ENCODE measurements at regions of chr9 and their contacts with region 1.

Region 1: DNA sequence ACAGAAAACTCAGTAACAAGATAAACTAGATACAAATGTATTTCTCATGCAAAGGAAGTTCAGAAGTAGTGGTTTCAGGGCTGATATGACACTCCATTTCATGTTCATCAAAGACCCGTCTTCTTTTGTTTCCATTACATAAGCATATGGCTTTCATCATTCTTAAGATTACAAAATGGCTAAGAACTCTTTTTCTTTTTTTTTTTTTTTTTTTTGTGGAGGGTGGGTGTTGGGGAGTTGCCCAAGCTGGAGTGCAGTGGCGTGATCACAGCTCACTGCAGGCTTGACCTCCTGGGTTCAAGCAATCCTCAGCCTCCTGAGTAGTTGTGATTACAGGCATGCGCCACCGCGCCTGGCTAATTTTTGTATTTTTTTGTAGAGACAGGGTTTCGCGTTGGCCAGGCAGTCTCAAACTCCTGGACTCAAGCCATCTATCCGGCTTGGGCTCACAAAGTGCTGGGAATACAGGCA is 22.0 kb upstream of the PTBP3 start:
- DNase-seq: no peak
- H3K4me3 ChIP-seq: no peak overlapping the region
- H3K27ac ChIP-seq: no peak overlapping the region
- H3K4me1 ChIP-seq: peaks cover 0 to 3% (median 0%) of the 10 kb centered on the region in 3 donors
- H3K27me3 ChIP-seq: no peaks in the 10 kb centered on the region
- CTCF ChIP-seq: no peak
- POLR2A ChIP-seq: no peak

Region 2: GRCh38 chr9:111631071-111631971 is 724.1 kb before region 1 on chr9 and contains the start of gene DNAJC25:
- intact Hi-C with region 1: no loop called
- DNase-seq: peak; percentile 82
- H3K4me3 ChIP-seq: peak within 1 kb of the TSS; percentile 80 to 97 (median 88)
- H3K27ac ChIP-seq: peak within 1 kb of the TSS; percentile 87 to 96 (median 94)
- H3K4me1 ChIP-seq: peaks cover 19 to 54% (median 19%) of the 10 kb centered on the region in 3 donors
- H3K27me3 ChIP-seq: no peaks in the 10 kb centered on the region
- CTCF ChIP-seq: peak in 2 of 6 experiments; percentile 23 to 35
- POLR2A ChIP-seq: peak in 3 of 4 donors; percentile 99 to 100 (median 100)
- total RNA-seq, gene DNAJC25: 7.2 to 8.7 (median 7.6) TPM

Region 3: DNA sequence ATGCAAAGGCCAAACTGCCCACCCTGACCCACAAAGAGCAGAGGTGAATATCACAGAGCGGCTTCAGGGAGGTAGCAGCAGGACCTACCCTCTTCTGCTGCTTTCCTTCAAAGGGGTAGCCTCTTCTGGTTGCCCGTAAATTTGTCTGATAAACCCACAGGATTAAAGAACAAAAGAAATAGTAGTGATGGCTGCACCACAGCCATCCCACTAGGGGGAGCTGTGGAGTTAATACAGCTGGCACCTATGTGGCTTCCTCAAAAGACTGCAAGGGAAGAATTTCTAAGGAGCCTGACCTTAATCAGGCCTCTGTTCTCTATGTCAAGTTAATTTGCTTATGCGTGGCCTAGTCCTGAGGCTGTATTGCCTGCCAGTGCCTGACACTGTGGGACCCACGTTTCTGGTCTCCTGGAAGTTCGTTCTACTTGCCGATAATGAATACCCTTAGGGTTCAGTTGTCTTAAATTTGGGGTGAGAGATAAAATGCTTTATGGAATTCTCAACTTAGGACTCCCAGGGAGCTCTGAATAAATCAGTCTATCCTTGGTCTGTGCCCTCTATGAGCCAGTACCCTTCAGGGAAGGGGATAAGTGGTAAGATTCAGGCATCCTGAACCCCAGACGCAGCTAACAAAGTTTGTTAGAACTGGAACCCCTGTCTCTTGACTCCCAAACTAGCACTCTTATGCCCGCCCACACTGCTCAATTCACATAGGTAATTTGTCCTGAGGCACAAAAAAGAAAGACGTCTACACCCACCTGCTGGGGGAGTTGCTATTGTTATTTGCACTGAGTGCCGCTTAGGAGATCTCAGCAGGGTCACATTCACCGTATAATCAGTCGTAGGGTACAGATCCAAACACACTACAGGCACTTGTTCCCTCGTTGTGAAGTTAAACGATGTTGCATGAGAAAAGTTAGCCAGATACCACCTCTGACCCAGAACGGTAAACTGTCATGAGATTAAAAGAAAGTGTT is 257.5 kb before region 1 on chr9:
- intact Hi-C with region 1: loop called (anchors 5 kb)
- DNase-seq: no peak
- H3K4me3 ChIP-seq: no peak overlapping the region
- H3K27ac ChIP-seq: no peak overlapping the region
- H3K4me1 ChIP-seq: peaks cover 0 to 18% (median 0%) of the 10 kb centered on the region in 3 donors
- H3K27me3 ChIP-seq: no peaks in the 10 kb centered on the region
- CTCF ChIP-seq: peak; percentile 81 to 91 (median 85)
- POLR2A ChIP-seq: no peak

Region 4: DNA sequence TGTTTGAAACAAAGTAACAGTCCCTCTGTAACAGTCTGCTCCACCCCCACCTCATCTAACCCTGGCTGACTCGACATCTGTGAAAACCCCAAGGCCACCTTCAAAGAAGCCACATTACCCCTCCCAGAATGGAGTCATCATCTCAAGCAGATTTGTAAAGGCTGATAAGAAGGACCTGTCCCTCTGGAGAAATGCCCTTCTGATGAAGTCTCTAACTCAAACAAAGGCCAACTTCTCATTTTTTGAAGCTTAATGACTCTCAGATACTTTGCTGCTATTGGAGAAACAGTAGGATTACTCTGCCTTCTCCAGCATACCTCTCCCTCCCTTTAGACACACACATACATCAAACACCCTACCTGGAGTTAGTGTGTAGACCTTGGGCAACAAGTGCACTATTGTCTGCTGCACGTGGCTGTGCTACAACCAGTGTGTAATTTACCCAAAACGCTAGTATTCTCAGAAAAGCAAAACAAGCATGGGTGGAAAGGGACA is 175.0 kb before region 1 on chr9:
- intact Hi-C with region 1: no loop called
- DNase-seq: no peak
- H3K4me3 ChIP-seq: no peak overlapping the region
- H3K27ac ChIP-seq: no peak overlapping the region
- H3K4me1 ChIP-seq: peaks cover 1 to 21% (median 4%) of the 10 kb centered on the region in 3 donors
- H3K27me3 ChIP-seq: no peaks in the 10 kb centered on the region
- CTCF ChIP-seq: no peak
- POLR2A ChIP-seq: no peak

Region 5: DNA sequence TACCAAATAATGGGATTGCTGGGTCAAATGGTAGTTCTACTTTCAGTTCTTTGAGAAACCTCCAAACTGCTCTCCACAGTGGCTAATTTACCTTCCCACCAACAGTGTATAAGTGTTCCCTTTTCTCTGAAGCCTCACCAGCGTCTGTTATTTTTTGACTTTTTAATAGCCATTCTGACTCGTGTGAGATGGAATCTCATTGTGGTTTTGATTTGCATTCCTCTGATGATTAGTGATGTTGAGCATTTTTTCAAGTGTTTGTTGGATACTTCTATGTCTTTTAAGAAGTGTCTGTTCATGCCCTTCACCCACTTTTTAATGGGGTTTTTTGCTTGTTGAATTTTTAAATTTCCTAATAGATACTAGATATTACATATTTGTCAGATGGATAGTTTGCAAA is 151.9 kb before region 1 on chr9:
- intact Hi-C with region 1: no loop called
- DNase-seq: no peak
- H3K4me3 ChIP-seq: no peak overlapping the region
- H3K27ac ChIP-seq: no peak overlapping the region
- H3K4me1 ChIP-seq: peaks cover 0 to 10% (median 7%) of the 10 kb centered on the region in 3 donors
- H3K27me3 ChIP-seq: no peaks in the 10 kb centered on the region
- CTCF ChIP-seq: no peak
- POLR2A ChIP-seq: no peak